Heart left ventricle (tissue), 16 donors: ENCODE measurements at regions of chr15 and their contacts with region 1.

Region 1: GRCh38 chr15:33489335-33489734 is 178.6 kb downstream of the RYR3 start:
- DNase-seq: no peak
- ATAC-seq: no peak
- H3K4me3 ChIP-seq: no peak overlapping the region
- H3K27ac ChIP-seq: no peak overlapping the region
- H3K4me1 ChIP-seq: peaks cover 0 to 11% (median 0%) of the 10 kb centered on the region in 12 donors
- H3K27me3 ChIP-seq: no peaks in the 10 kb centered on the region
- CTCF ChIP-seq: no peak
- POLR2A ChIP-seq: no peak

Region 2: DNA sequence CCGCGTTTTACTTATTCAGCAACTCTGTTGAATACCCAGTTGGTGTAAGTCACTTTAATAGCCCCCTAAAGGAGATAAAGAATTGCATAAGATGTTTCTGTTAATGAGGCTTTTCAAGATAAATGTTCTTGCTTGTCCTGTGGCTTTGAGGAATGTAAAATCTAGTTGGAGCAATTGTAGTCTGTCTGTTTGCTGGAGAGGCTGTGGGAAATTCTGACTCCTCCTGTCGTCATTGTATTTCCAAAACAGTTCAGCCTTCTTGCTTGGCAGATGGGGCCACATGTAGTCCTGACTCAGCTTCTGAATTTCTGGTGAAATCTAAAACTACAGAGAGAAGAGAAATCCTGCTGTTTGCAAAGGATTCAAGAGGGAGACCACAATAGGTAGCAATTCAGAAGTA is 64.2 kb before region 1 on chr15:
- intact Hi-C with region 1: loop called in 1 of 10 experiments (anchors 10 kb)
- DNase-seq: peak in 2 of 5 donors; percentile 45 to 47
- ATAC-seq: peak; percentile 64 to 76 (median 68)
- H3K4me3 ChIP-seq: no peak overlapping the region
- H3K27ac ChIP-seq: no peak overlapping the region
- H3K4me1 ChIP-seq: no peaks in the 10 kb centered on the region
- H3K27me3 ChIP-seq: no peaks in the 10 kb centered on the region
- CTCF ChIP-seq: no peak
- POLR2A ChIP-seq: no peak